Calu3 (cell line): ENCODE measurements at regions of chr15 and their contacts with region 1.

Region 1: DNA sequence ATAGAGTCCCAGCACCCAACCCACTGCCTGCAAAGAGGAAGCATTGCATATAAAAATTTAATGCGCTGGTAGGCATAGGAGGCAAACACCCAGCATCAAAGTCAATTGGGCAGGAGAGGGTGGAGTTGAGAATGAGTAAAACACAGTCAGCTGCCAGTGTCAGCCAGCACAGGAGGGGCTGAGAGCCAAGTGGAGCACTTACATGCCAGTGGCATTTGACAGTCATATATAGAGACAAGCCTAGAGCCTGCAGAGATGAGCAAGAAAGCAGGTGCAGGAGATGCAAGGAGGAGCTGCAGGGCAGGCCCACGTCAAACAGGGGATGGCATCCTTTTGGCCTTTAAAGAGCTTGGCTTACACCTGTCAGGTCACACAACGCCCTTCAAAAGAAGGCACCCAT is 27.6 kb upstream of the ZFAND6 start:
- DNase-seq: no peak
- H3K4me3 Mint-ChIP-seq: no peak overlapping the region
- H3K27ac Mint-ChIP-seq: no peak overlapping the region
- H3K4me1 Mint-ChIP-seq: peaks cover 28% of the 10 kb centered on the region
- H3K27me3 Mint-ChIP-seq: no peaks in the 10 kb centered on the region
- CTCF ChIP-seq: no peak

Region 2: GRCh38 chr15:79987569-79987955 is 44.3 kb before region 1 on chr15:
- CTCF ChIA-PET with region 1: no interaction called
- intact Hi-C with region 1: no loop called
- DNase-seq: no peak
- H3K4me3 Mint-ChIP-seq: no peak overlapping the region
- H3K27ac Mint-ChIP-seq: no peak overlapping the region
- H3K4me1 Mint-ChIP-seq: no peaks in the 10 kb centered on the region
- H3K27me3 Mint-ChIP-seq: peaks cover 29% of the 10 kb centered on the region
- CTCF ChIP-seq: no peak

Region 3: DNA sequence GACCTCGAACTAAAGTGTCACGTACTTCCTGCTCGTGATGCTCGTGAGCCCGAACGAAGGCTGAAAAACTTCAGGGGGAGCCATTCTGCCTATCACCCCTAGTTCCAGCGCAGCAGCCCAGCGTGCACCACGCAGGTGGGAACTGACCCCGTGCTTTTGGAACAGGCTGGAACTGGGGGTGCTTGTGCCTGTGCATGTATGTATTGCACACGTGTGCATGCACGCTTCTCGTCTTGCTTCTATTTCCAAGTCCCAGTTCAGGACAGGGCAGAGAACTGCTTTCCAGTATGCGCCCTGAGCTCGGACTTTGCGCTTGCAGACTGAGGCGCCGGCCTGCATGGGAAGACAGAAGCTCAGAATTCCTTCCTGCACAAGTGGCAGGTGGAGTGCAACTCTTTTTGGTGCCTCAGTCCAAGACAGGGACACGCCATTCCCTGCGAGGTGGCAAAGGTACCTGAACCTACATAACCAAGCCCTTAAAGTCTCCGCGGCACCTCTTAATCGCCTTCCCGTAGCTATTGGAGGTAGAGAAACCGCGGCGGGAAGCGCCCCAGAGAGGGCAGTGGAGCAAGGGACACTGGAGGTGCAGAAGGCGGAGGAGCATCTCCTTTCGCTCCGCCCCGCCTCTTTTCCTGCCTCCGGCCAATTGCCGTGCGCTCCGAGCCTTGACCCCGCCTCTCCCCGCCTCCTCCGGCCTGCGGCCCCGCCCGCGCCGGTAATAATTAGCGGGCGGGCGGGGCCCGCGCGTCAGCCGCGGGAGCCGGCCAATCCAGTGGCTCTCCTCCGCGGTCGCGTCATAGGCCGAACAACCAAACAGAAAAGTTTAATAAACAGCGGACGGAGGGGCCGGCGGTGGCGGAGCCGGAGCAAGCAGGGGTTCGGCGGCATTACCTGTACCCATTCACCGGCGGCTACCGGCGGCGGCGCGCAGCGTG is 27.3 kb after region 1 on chr15 and contains the start of gene ZFAND6:
- CTCF ChIA-PET with region 1: no interaction called
- intact Hi-C with region 1: loop called (anchors 2 kb)
- DNase-seq: peak; percentile 98
- H3K4me3 Mint-ChIP-seq: peak within 1 kb of the TSS; percentile 92
- H3K27ac Mint-ChIP-seq: peak within 1 kb of the TSS; percentile 85
- H3K4me1 Mint-ChIP-seq: peaks cover 13% of the 10 kb centered on the region
- H3K27me3 Mint-ChIP-seq: no peaks in the 10 kb centered on the region
- CTCF ChIP-seq: no peak
- total RNA-seq, gene ZFAND6: 87.5 and 88.6 TPM in 2 replicates

Region 4: DNA sequence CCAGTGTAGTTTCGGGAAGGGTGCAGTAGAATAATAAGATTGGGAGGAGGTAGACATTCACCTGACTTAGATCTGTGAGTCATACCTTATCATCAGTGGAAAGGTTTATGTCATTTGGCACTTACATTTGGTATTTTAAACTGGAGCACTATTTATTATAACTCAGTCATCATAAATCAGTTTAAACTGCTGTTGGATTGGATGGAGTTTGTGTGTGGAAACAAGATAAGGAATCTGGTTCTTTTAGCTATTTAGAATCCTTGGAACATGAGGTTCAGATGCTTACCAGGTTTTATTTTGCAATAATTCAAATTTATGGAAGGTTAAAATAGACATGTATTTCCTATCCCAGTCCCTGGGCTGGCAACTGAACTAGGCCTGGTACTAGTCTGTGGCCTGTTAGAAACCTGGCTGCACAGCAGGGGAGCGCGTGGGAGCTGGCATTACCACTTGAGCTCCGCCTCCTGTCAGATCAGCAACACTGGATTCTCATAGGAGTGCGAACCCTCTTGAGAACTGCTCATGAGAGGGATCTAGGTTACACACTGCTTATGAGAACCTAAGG is 62.1 kb after region 1 on chr15:
- CTCF ChIA-PET with region 1: no interaction called
- intact Hi-C with region 1: no loop called
- DNase-seq: peak; percentile 11
- H3K4me3 Mint-ChIP-seq: no peak overlapping the region
- H3K27ac Mint-ChIP-seq: no peak overlapping the region
- H3K4me1 Mint-ChIP-seq: peaks cover 23% of the 10 kb centered on the region
- H3K27me3 Mint-ChIP-seq: no peaks in the 10 kb centered on the region
- CTCF ChIP-seq: no peak